Lower leg skin (tissue), 4 donors: ENCODE measurements at regions of chr22 and their contacts with region 1.

Region 1: GRCh38 chr22:36065775-36066559 is 37.3 kb upstream of the RBFOX2 start:
- DNase-seq: peak; percentile 80 to 97
- H3K4me3 ChIP-seq: peak overlapping the region; percentile 13
- CTCF ChIP-seq: peak in 2 of 3 donors; percentile 84 to 99
- POLR2A ChIP-seq: no peak

Region 2: GRCh38 chr22:35930933-35931332 is 135.0 kb before region 1 on chr22:
- intact Hi-C with region 1: loop called (anchors 10 kb)
- DNase-seq: no peak
- H3K4me3 ChIP-seq: no peak overlapping the region
- CTCF ChIP-seq: no peak
- POLR2A ChIP-seq: no peak